HEK293T (cell line): ENCODE measurements at regions of chr6 and their contacts with region 1.

Region 1: DNA sequence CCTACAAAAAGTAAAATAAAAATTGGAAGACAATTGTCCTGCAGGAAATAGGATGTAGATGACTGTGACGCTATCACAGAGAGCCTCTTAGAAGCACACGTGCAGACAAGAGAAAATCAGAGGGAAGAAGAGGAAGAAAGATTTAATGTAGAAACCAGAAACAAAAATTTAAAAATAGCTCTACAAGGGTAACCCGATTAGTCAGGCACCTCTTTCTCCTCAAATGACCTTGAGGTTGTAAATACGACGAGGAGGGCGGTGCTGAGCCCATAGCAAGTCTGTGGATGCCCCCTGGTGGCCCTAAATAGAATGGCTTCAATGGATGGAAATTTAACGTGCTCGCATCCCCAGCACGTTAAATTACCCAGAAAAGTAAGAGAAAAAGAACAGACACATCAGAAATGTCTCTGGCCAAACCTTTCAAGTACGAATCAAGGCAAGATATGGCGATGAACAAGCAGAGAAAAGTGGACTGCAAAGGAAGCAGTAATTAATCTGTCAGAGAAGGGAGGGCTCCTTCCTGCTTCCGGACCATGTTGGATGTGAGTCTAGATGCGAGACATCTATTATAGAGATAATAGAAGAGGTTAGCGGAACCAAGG is 4.2 kb upstream of the PRPH2 start:
- DNase-seq: peak; percentile 76

Region 2: GRCh38 chr6:41901882-41902519 is 824.6 kb before region 1 on chr6:
- CTCF ChIA-PET with region 1: no interaction called
- POLR2A ChIA-PET with region 1: no interaction called
- DNase-seq: no peak

Region 3: DNA sequence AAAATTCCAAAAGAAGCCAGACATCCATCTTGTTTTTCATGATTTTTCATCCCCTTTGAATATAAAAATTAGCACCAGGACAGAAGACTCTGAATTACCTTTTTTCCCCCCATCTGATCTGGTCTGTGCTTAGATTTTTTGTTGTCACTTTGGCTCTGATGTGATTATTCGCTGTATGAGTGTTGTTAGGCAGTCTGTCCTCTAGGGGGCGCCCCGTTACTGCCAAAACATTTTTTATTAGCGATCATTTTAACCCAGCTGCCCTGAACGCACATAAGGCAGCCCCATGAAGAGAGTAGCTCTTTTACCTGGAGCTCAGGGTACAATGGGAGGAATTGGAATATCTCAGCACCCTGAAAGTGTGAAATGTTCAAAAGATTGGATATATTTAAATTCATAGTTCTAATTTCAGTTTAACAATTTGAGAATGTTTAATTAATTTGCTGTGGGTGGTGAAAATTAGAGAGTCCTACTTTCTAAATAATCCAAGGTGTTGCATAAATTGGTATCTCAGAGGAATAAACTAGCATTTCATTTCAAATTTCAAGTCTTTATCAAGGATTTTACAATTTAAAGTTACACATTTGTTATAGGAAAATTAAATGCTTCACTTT is 64.9 kb before region 1 on chr6:
- CTCF ChIA-PET with region 1: interaction called, 17 read pairs
- POLR2A ChIA-PET with region 1: interaction called, 7 read pairs
- DNase-seq: peak; percentile 76